Activated CD8-positive, alpha-beta T cell treated with anti-CD3 and anti-CD28 coated beads for 36 hours (primary cell): ENCODE measurements at regions of chr2 and their contacts with region 1.

Region 1: DNA sequence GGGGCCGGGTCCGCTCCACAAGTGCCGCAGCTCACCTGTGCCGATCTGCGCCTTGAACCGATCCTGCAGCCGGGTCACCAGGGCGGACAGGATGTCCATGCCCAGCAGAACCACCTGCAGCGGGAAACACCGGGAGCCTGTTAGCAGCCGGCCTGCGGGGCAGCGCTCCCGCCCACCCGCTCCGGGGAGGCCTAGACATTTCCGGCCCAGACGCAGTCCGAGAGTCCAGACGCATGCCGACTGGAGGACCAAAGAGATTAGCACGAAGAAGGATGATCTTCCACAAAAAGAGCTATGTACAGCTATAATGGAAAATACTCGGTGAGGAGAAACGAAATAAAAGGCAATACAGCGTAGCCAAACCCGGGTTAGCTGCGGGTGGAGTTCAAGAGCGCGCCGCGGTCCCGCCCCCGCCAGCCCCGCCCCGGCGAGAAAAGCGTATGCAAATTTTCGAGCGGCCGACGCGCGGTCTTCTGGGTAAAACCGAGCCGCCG is 421 bp upstream of the RNU4ATAC start:
- DNase-seq: peak; percentile 90
- ATAC-seq: peak; percentile 63
- H3K4me3 Mint-ChIP-seq: peak overlapping the region; percentile 83
- H3K27ac Mint-ChIP-seq: peak overlapping the region; percentile 92
- H3K4me1 Mint-ChIP-seq: peaks cover 62% of the 10 kb centered on the region
- H3K27me3 Mint-ChIP-seq: no peaks in the 10 kb centered on the region
- CTCF ChIP-seq: no peak

Region 2: DNA sequence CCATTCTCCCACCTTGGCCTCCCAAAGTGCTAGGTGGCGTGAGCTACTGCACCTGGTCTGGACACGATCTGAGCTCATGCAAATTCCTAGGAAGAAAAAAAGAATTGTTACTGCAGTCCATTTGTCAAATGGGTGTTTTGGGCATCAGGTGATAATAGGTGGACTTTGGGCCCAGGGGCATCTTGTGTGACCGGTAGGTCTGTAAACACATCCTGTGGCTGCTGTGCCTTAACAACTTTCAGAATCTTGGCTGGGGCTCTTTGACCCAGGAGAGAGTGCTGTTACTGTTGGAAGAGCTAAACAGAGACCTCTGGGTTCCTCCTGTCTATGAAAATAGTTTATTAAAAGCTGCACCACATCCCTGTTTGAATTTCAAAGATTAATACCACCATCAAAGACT is 210.3 kb before region 1 on chr2:
- CTCF ChIA-PET with region 1: no interaction called
- POLR2A ChIA-PET with region 1: no interaction called
- intact Hi-C with region 1: no loop called
- DNase-seq: no peak
- ATAC-seq: no peak
- H3K4me3 Mint-ChIP-seq: no peak overlapping the region
- H3K27ac Mint-ChIP-seq: no peak overlapping the region
- H3K4me1 Mint-ChIP-seq: no peaks in the 10 kb centered on the region
- H3K27me3 Mint-ChIP-seq: peaks cover 3% of the 10 kb centered on the region
- CTCF ChIP-seq: no peak

Region 3: GRCh38 chr2:121418494-121419058 is 111.7 kb before region 1 on chr2:
- CTCF ChIA-PET with region 1: no interaction called
- POLR2A ChIA-PET with region 1: interaction called, 3 read pairs
- intact Hi-C with region 1: loop called (anchors 10 kb)
- DNase-seq: no peak
- ATAC-seq: no peak
- H3K4me3 Mint-ChIP-seq: no peak overlapping the region
- H3K27ac Mint-ChIP-seq: no peak overlapping the region
- H3K4me1 Mint-ChIP-seq: no peaks in the 10 kb centered on the region
- H3K27me3 Mint-ChIP-seq: no peaks in the 10 kb centered on the region
- CTCF ChIP-seq: no peak

Region 4: DNA sequence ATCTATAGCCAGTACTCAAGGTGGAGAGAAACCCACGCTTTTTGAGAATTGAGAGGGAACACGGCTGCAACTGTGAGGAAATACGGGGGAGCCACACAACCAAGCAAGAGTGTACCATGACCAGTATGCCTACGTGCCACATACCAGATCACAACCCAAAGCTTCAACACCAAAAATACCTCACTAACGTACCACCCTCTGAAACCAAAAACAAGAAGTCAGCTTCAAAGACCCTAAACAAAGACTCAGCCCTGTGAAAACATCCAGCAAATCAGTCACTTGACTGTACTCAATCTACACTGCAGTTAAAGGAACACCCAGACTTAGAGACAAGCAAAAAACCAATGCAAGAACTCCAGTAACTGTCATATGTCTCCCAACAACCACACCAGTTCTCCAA is 17.4 kb after region 1 on chr2:
- CTCF ChIA-PET with region 1: interaction called, 7 read pairs
- POLR2A ChIA-PET with region 1: interaction called, 24 read pairs
- intact Hi-C with region 1: no loop called
- DNase-seq: no peak
- ATAC-seq: no peak
- H3K4me3 Mint-ChIP-seq: no peak overlapping the region
- H3K27ac Mint-ChIP-seq: peak overlapping the region; percentile 8
- H3K4me1 Mint-ChIP-seq: peaks cover 59% of the 10 kb centered on the region
- H3K27me3 Mint-ChIP-seq: no peaks in the 10 kb centered on the region
- CTCF ChIP-seq: no peak

Region 5: GRCh38 chr2:121596221-121597080 is 66.2 kb after region 1 on chr2:
- CTCF ChIA-PET with region 1: no interaction called
- POLR2A ChIA-PET with region 1: interaction called, 17 read pairs
- intact Hi-C with region 1: no loop called
- DNase-seq: peak; percentile 60
- ATAC-seq: peak; percentile 92
- H3K4me3 Mint-ChIP-seq: peak overlapping the region; percentile 77
- H3K27ac Mint-ChIP-seq: peak overlapping the region; percentile 94
- H3K4me1 Mint-ChIP-seq: peaks cover 47% of the 10 kb centered on the region
- H3K27me3 Mint-ChIP-seq: no peaks in the 10 kb centered on the region
- CTCF ChIP-seq: no peak

Region 6: DNA sequence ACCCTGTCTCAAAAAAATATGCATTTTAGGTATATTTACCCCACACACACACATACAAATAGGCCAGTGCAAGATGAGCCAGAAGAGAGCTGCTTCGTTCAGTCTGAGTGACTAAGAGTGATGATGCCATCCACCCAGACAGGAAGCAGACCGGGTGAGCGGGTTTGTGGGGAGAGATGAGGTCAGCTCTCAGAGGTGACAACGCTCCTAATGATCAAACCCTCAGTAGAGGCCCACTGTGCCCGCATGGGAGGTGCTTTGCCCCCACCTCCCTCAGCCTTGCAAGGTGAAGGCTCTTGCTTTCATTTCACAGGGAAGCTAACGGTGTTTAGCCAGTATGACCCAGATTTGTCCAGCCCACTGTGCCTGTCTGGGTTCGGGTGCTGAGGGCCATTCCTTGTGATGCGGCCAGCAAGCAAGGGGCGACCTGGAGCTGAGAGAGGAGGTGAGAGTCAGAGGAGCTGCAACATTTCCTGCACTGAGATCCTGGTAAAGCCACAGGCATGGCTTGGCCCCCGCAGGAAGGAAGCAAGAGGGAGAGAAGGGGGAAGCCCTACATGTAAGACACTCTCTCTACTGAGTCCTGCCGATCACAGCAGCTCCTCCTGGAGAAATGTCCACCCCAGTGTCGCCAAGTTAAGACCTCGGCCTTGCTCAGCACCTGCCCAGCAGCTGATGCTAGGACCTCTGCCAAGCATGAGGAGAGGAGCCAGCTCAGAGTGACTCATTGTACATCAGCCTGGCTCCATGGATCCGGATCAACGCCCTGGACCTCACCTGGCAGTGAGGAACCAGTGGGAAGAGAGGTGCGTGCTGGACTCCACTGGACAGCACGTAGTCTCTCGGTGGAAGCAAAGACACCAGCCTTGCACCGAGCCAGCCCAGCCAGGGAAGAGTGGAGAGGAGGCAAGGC is 169.4 kb after region 1 on chr2:
- CTCF ChIA-PET with region 1: interaction called, 11 read pairs
- POLR2A ChIA-PET with region 1: interaction called, 38 read pairs
- intact Hi-C with region 1: no loop called
- DNase-seq: peak; percentile 97
- ATAC-seq: peak; percentile 97
- H3K4me3 Mint-ChIP-seq: peak overlapping the region; percentile 71
- H3K27ac Mint-ChIP-seq: peak overlapping the region; percentile 93
- H3K4me1 Mint-ChIP-seq: peaks cover 42% of the 10 kb centered on the region
- H3K27me3 Mint-ChIP-seq: no peaks in the 10 kb centered on the region
- CTCF ChIP-seq: no peak

Region 7: GRCh38 chr2:121736462-121737341 is 206.4 kb after region 1 on chr2 and contains the start of gene NIFK:
- CTCF ChIA-PET with region 1: interaction called, 4 read pairs
- POLR2A ChIA-PET with region 1: interaction called, 36 read pairs
- intact Hi-C with region 1: no loop called
- DNase-seq: peak; percentile 100
- ATAC-seq: peak; percentile 93
- H3K4me3 Mint-ChIP-seq: peak within 1 kb of the TSS; percentile 89
- H3K27ac Mint-ChIP-seq: peak within 1 kb of the TSS; percentile 97
- H3K4me1 Mint-ChIP-seq: peaks cover 41% of the 10 kb centered on the region
- H3K27me3 Mint-ChIP-seq: no peaks in the 10 kb centered on the region
- CTCF ChIP-seq: no peak
- total RNA-seq, gene NIFK: 115 to 134 TPM